ENCODE measurements at regions of chr4 and their contacts with region 1.

Region 1: GRCh38 chr4:55866973-55867574 is 13.6 kb downstream of the EXOC1 start:
- DNase-seq: peak in 1 of 2 donors; percentile 8
- ATAC-seq: peak; percentile 64 to 96 (median 90)
- H3K4me3 ChIP-seq: no peak overlapping the region
- H3K27ac ChIP-seq: peak overlapping the region in 6 of 10 donors; percentile 36 to 77 (median 61)
- H3K4me1 ChIP-seq: peaks cover 0 to 27% (median 20%) of the 10 kb centered on the region in 9 donors
- H3K27me3 ChIP-seq: no peaks in the 10 kb centered on the region
- CTCF ChIP-seq: peak; percentile 65 to 95 (median 88)

Region 2: GRCh38 chr4:55358668-55359067 is 508.4 kb before region 1 on chr4:
- intact Hi-C with region 1: loop called in 1 of 10 experiments (anchors 10 kb)
- DNase-seq: no peak
- ATAC-seq: peak in 6 of 8 donors; percentile 50 to 82 (median 68)
- H3K4me3 ChIP-seq: no peak overlapping the region
- H3K27ac ChIP-seq: peak overlapping the region in 9 of 10 donors; percentile 1 to 85 (median 54)
- H3K4me1 ChIP-seq: peaks cover 2 to 38% (median 18%) of the 10 kb centered on the region in 9 donors
- H3K27me3 ChIP-seq: no peaks in the 10 kb centered on the region
- CTCF ChIP-seq: no peak